Activated CD4-positive, alpha-beta T cell treated with anti-CD3 and anti-CD28 coated beads, Interleukin-2, amount 10 ng/mL, durations not matched to agents 24 days and 14 days (primary cell): ENCODE measurements at regions of chr3 and their contacts with region 1.

Region 1: GRCh38 chr3:151086484-151087456 is 1.3 kb downstream of the MED12L start:
- DNase-seq: peak; percentile 88
- H3K4me3 Mint-ChIP-seq: peak overlapping the region; percentile 88
- H3K27ac Mint-ChIP-seq: peak overlapping the region; percentile 53
- H3K4me1 Mint-ChIP-seq: peaks cover 8% of the 10 kb centered on the region
- H3K27me3 Mint-ChIP-seq: peaks cover 58% of the 10 kb centered on the region

Region 2: DNA sequence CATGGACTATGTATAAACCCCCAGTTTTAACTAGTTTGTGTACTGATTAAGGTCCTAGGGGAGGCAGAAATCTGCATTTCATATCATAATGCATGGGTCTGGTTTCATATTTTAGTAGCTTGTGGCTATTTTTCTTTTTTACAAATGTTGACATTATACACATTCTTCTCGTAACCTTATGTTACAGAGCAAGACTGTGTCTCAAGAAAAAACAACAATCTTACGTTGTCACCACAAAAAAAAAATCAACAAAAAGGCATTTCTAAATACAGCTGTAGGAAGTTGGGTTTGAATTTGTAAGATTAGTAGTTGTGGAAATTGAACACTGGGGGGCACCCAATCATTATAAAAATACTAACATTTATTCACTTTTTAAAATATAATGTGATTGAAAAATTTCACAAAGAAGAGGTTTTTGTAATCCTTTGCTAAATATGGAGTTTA is 558.4 kb before region 1 on chr3:
- intact Hi-C with region 1: loop called (anchors 5 kb)
- DNase-seq: no peak
- H3K4me3 Mint-ChIP-seq: no peak overlapping the region
- H3K27ac Mint-ChIP-seq: no peak overlapping the region
- H3K4me1 Mint-ChIP-seq: peaks cover 6% of the 10 kb centered on the region
- H3K27me3 Mint-ChIP-seq: peaks cover 14% of the 10 kb centered on the region

Region 3: GRCh38 chr3:150721285-150722130 is 365.3 kb before region 1 on chr3:
- intact Hi-C with region 1: loop called (anchors 1 kb)
- DNase-seq: peak; percentile 79
- H3K4me3 Mint-ChIP-seq: no peak overlapping the region
- H3K27ac Mint-ChIP-seq: no peak overlapping the region
- H3K4me1 Mint-ChIP-seq: peaks cover 20% of the 10 kb centered on the region
- H3K27me3 Mint-ChIP-seq: no peaks in the 10 kb centered on the region

Region 4: DNA sequence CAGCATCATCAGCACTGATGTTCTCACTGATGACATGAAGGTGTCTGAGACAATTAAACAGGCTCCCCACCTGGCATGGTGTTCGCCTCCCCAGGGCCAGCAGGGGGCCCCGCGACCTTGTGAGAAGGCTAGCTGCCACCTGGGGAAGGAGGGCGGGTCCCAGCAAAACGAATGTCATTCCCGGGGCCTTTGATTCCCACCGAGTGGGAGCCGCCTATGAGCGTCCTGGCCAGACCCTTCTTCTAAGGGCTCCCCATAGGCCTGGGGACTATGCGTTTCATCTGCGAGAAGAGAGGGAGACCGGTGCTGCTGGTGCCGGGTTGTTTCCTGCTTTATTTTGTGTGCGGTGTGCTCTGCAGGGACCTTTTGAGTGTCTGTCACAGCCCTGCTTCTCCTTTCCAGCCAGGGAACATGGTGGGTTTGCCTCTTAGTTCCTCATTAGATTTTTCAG is 161.0 kb before region 1 on chr3:
- intact Hi-C with region 1: loop called (anchors 5 kb)
- DNase-seq: peak; percentile 85
- H3K4me3 Mint-ChIP-seq: peak overlapping the region; percentile 52
- H3K27ac Mint-ChIP-seq: no peak overlapping the region
- H3K4me1 Mint-ChIP-seq: peaks cover 2% of the 10 kb centered on the region
- H3K27me3 Mint-ChIP-seq: peaks cover 14% of the 10 kb centered on the region

Region 5: DNA sequence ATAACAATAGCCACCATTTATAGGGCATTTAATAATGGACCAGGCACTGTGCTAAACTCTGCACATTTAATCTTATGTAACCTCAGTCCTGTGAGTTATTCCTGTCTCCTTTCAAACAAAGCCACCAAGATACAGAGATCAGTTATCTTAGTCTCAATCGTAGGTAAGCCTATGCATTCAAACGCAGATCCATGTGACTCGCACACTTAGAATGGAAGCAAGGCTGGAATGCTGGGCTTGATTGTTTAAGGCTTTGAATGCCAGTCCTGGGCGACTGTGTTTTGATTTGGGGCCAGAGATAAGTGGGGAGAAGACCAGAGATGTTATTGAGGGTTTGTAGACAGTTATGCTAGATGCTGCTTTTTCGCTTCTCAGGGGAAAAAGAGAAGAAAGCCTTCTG is 20.9 kb after region 1 on chr3:
- intact Hi-C with region 1: no loop called
- DNase-seq: no peak
- H3K4me3 Mint-ChIP-seq: no peak overlapping the region
- H3K27ac Mint-ChIP-seq: no peak overlapping the region
- H3K4me1 Mint-ChIP-seq: no peaks in the 10 kb centered on the region
- H3K27me3 Mint-ChIP-seq: peaks cover 12% of the 10 kb centered on the region

Region 6: GRCh38 chr3:151210676-151211381 is 124.1 kb after region 1 on chr3:
- intact Hi-C with region 1: loop called (anchors 5 kb)
- DNase-seq: peak; percentile 75
- H3K4me3 Mint-ChIP-seq: peak overlapping the region; percentile 76
- H3K27ac Mint-ChIP-seq: peak overlapping the region; percentile 90
- H3K4me1 Mint-ChIP-seq: peaks cover 56% of the 10 kb centered on the region
- H3K27me3 Mint-ChIP-seq: no peaks in the 10 kb centered on the region